ENCODE measurements at regions of chr17 and their contacts with region 1.

Region 1: GRCh38 chr17:7989781-7990655 is 12.4 kb upstream of the GUCY2D start:
- DNase-seq: peak; percentile 92
- CTCF ChIP-seq: peak; percentile 98

Region 2: DNA sequence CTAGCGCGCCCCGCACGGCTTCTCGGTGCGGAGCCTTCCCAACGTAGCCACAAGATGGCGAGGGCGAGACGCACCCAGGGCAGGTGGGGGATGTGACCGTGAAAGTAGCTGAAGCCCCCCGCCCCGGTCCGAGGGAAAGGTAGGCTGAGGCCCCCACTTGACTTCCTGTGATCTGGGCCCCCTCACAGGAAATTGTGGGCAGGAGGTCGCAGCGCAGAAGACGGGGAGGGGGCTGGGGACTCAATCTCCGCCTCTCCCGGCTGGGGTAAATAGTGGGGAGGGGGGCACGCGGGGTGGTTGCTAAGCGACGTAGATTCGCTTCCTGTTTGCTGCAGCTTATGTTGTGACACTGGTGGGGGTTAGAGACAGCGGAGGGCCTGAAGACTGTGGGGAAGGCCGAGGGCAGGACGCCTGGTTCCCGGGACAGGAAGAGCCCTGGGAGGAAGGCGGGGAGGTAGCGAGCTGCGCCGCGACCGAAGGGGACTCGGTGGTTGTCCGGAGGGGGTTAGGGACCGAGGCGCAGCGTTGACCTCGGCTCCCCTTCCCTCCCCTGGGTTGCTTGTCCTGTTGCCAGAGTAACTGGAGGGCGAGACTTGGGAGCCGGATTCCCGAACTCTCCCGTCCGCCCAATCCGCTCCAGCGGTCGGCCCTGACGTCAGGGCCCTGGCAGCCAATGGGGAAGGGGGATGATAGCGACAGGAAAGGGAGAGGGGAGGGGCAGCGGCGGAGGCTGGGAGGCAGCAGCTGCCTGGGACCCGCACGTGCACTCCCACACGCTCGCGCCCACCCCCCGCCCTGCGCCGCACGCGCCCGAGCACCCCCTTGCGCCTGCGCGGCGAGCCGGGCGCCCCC is 154.8 kb before region 1 on chr17:
- CTCF ChIA-PET with region 1: interaction called, 18 read pairs
- POLR2A ChIA-PET with region 1: no interaction called
- DNase-seq: peak; percentile 92
- CTCF ChIP-seq: peak; percentile 95

Region 3: GRCh38 chr17:7897773-7898172 is 92.2 kb before region 1 on chr17:
- CTCF ChIA-PET with region 1: interaction called, 24 read pairs
- POLR2A ChIA-PET with region 1: no interaction called
- DNase-seq: no peak
- CTCF ChIP-seq: no peak

Region 4: DNA sequence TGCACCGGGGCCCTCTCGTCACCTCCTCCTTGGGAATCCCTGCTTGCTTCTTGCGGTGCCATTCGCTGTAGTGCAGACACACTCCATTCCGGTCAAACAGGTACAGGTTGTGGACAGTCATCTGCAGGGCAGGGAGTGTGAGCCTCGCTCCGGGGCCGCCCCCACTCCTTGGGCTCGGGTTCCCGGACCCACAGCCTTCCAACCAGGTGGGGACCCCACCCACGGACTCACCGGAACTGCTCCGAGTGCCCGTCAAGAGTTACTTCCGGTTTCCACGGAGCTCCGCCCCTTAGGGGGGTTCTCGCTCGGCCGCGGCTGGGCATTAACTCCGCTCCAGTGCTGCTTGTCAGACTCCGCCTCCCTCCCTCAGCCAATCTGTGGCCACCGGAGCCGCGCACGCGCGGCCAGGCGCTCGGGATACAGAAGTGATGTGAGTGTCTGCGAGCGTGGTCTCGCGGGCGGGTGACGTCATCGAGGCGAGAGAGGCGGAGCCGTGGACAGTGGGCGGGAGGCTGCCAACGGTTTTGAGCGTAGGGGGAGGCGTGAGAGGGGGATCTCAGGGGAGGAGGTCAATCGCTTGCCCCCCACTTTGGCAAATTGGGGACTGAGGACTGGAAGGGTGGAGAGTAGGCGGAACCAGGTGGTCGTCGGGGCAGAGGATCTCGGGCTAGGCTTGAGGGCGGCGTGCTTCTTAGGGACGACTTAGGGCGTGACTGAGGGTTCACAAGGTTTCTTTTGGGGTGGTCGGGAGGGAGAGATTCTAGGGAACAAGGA is 58.1 kb before region 1 on chr17 and contains the starts of genes CNTROB and TRAPPC1:
- CTCF ChIA-PET with region 1: interaction called, 107 read pairs
- POLR2A ChIA-PET with region 1: interaction called, 3 read pairs
- DNase-seq: peak; percentile 100
- CTCF ChIP-seq: no peak

Region 5: DNA sequence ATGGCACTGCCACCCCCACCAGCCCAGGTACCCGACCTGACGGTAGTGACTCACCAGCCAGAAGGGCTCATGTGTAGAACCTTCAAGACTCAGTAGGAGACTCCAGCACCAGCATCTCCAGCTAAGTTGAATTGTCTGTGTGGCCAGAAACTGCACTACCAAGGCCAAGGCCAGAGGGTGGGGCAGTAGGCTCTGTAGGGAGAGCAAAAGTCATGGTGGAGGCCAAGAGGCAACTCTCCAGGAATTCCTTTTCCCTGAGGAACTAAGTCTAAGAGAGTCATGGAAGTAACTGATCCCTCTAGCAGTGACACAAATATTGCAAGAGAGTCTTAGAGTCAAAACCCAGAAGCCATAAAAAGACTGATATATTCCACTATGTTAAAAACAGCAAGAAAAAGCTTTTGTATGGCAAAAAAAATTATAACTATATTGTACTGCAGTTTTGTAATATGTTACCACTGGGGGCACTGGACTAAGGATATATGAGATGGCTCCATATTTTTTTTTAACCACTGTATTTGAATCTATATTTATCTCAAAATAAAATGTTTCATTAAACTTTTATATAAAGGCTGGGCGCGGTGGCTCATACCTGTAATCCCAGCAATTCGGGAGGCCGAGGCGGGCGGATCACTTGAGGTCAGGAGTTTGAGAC is 17.8 kb before region 1 on chr17:
- CTCF ChIA-PET with region 1: interaction called, 51 read pairs
- POLR2A ChIA-PET with region 1: no interaction called
- DNase-seq: no peak
- CTCF ChIP-seq: no peak

Region 6: DNA sequence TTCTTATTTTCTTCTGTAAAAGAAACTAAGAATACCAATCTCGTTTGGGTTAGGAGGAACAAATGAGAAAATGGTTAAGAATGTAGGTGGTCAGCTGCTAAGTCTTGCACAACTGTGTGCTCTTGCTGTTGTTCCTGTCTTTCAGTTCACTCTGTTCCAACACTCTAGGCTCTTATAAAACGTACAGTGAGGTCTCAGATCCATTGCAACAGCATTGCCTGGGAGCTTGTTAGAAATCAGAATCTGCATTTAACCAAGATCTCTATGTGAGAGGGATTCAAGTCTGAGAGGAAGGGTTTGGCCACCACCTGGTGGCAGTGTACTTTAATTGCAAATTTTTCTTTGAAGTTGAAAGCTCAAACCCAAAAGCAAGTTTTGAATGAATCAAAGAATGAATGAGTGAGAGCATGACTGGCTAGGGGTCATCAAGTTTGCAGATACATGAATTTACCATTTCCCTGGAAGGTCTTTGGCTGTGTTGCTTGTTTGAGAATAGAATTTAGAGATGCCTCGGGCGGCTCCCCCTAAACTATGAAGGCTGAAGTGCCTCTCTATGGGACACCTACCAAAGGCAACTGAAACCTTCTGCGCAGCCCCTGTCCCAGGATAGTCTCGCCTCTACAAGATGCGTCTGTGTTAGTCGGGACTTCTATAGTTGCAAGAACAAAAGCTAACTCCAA is 51.4 kb after region 1 on chr17:
- CTCF ChIA-PET with region 1: interaction called, 38 read pairs
- POLR2A ChIA-PET with region 1: no interaction called
- DNase-seq: peak; percentile 65
- CTCF ChIP-seq: peak; percentile 47